CD4-positive, alpha-beta T cell (primary cell): ENCODE measurements at regions of chr1 and their contacts with region 1.

Region 1: DNA sequence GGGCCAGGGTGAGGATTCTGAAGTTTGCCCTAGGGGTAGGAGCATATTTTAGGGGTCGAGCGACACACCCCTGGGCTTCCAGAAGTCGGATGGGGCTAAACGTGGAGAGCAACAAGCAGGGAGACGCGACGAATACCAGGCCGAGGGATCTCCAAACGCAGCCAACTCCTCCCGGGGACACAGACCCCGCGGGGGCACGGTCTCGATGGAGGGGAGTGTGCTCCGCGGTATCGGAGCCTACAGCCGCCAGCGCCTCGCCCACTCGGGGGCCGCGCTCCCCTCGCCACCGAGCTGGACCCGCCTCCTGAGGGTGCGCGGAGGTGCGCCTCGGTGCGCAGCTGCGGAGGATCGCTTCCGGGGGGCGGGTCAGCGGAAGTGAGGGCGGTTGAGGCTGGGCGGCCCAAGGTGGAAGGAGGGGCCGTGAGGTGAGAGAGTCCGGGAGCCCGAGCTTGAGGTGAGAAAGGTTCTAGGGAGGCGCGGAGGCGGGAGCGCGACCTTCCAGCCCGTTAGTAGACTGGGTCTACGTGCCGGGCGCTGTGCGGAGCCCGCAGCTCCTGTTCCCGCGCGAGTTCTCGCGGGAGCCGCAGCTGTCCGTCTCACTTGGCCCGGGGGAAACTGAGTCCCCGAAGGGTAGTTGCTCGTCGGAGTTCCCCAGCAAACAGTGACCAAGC is at the start of gene MTFR1L:
- DNase-seq: peak; percentile 87 to 97 (median 93)
- ATAC-seq: peak; percentile 85
- H3K4me3 ChIP-seq: peak within 1 kb of the TSS; percentile 97
- H3K4me3 Mint-ChIP-seq: peak within 1 kb of the TSS; percentile 98
- H3K27ac ChIP-seq: peak within 1 kb of the TSS; percentile 88 to 89
- H3K27ac Mint-ChIP-seq: peak within 1 kb of the TSS; percentile 97
- H3K4me1 ChIP-seq: peaks cover 44% of the 10 kb centered on the region
- H3K4me1 Mint-ChIP-seq: peaks cover 49% of the 10 kb centered on the region
- H3K27me3 ChIP-seq: no peaks in the 10 kb centered on the region
- H3K27me3 Mint-ChIP-seq: no peaks in the 10 kb centered on the region
- CTCF ChIP-seq: no peak
- total RNA-seq, gene MTFR1L: 25.5 to 28.0 TPM

Region 2: GRCh38 chr1:25232027-25232865 is 587.5 kb before region 1 on chr1 and contains the start of gene SYF2:
- CTCF ChIA-PET with region 1: no interaction called
- POLR2A ChIA-PET with region 1: interaction called, 12 read pairs
- intact Hi-C with region 1: no loop called
- DNase-seq: peak; percentile 76 to 96 (median 86)
- ATAC-seq: peak; percentile 90
- H3K4me3 ChIP-seq: peak within 1 kb of the TSS; percentile 65
- H3K4me3 Mint-ChIP-seq: no peak within 1 kb of the TSS
- H3K27ac ChIP-seq: peak within 1 kb of the TSS; percentile 85 to 93
- H3K27ac Mint-ChIP-seq: no peak within 1 kb of the TSS
- H3K4me1 ChIP-seq: peaks cover 30% of the 10 kb centered on the region
- H3K4me1 Mint-ChIP-seq: peaks cover 27% of the 10 kb centered on the region
- H3K27me3 ChIP-seq: no peaks in the 10 kb centered on the region
- H3K27me3 Mint-ChIP-seq: no peaks in the 10 kb centered on the region
- CTCF ChIP-seq: no peak
- total RNA-seq, gene SYF2: 93.3 to 98.9 TPM

Region 3: DNA sequence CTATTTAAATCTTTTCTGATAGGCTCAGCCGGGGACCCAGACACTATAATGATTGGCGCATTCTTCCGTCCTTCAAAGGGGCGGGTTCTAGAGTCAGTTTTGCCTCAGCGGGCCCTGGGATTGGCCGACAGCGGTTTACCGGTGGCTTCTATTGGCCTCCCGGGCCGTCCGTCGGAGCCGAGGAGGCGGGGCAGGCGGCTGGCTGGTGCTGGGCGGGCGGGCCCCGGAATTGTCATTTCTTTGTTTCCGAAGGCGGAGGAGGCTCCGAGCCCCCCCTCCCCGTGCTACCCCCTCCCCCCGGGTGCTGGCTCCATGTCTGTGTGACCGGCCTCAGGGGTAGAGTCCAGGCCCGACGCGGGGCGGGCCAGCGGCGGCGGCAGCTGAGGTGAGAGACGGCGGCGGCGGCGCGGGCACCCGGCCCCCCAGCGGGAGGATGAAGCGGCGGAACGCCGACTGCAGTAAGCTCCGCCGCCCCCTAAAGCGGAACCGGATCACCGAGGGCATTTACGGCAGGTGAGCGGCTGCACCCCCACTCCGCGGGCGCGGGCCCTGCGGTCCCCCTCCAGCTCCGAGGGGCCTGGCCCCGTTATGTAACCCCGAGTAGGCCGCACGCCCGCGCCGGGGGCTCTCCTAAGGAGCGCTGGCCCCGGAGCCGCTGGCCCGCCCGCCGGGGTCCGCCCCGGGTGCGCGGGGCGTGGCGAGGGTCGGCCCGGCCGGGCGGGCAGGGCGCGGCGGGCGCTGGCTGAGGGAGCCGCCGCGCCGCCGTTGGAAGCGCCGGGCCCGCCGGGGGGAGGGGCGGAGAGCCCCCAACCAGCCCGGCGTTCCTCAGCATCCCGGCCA is 388.8 kb before region 1 on chr1 and contains the start of gene MACO1:
- CTCF ChIA-PET with region 1: no interaction called
- POLR2A ChIA-PET with region 1: interaction called, 10 read pairs
- intact Hi-C with region 1: loop called in 1 of 2 experiments (anchors 5 kb)
- DNase-seq: peak; percentile 93 to 98 (median 96)
- ATAC-seq: peak; percentile 82
- H3K4me3 ChIP-seq: peak within 1 kb of the TSS; percentile 83
- H3K4me3 Mint-ChIP-seq: peak within 1 kb of the TSS; percentile 92
- H3K27ac ChIP-seq: peak within 1 kb of the TSS; percentile 96 to 97
- H3K27ac Mint-ChIP-seq: peak within 1 kb of the TSS; percentile 100
- H3K4me1 ChIP-seq: peaks cover 9% of the 10 kb centered on the region
- H3K4me1 Mint-ChIP-seq: peaks cover 58% of the 10 kb centered on the region
- H3K27me3 ChIP-seq: no peaks in the 10 kb centered on the region
- H3K27me3 Mint-ChIP-seq: no peaks in the 10 kb centered on the region
- CTCF ChIP-seq: no peak
- total RNA-seq, gene MACO1: 24.1 to 24.9 TPM

Region 4: DNA sequence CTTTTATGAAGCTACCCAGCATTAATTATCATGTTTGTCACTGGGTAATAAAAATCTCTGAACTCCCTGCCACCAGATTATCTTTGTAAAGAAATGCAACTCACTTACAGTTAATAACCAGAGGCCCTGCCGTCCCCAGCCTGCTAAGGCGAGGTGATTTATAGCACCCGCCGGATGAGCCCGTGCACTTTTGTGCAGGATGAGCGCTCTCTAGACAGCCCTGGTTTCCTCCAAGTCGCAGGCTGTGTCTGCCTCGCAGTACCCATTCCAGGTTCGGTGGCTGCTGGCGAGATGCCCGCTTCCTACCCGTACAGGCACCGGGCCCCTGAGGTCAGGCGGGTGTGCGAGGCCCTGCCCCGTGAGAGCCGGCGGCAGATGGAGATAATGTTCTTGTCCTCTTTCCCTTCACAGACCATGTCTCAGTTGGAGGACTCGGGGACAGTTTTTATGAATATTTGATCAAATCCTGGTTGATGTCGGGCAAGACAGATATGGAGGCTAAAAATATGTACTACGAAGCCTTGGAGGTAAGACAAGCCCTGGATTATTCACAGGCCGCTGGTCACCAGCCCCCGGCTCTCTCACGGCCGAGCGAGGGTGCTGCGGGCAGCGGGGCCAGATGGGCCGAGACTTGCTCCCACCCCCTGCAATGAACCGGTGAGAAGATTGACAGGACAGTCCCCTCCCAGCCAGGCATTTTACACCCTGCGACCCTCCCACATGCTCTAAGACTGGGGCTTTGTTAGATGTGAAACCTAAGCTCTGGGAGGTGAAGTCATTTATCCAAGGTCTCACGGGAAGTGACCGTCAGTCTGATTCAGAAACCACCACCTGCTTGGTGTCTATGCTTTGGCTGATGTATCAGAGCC is 48.2 kb before region 1 on chr1:
- CTCF ChIA-PET with region 1: no interaction called
- POLR2A ChIA-PET with region 1: interaction called, 26 read pairs
- intact Hi-C with region 1: no loop called
- DNase-seq: peak; percentile 15 to 78 (median 58)
- ATAC-seq: peak; percentile 17
- H3K4me3 ChIP-seq: no peak overlapping the region
- H3K4me3 Mint-ChIP-seq: peak overlapping the region; percentile 77
- H3K27ac ChIP-seq: peak overlapping the region; percentile 12 to 72
- H3K27ac Mint-ChIP-seq: peak overlapping the region; percentile 98
- H3K4me1 ChIP-seq: peaks cover 82% of the 10 kb centered on the region
- H3K4me1 Mint-ChIP-seq: peaks cover 85% of the 10 kb centered on the region
- H3K27me3 ChIP-seq: no peaks in the 10 kb centered on the region
- H3K27me3 Mint-ChIP-seq: no peaks in the 10 kb centered on the region
- CTCF ChIP-seq: no peak

Region 5: GRCh38 chr1:25837262-25837875 is 17.7 kb after region 1 on chr1:
- CTCF ChIA-PET with region 1: interaction called, 3 read pairs
- POLR2A ChIA-PET with region 1: interaction called, 43 read pairs
- intact Hi-C with region 1: no loop called
- DNase-seq: peak in 1 of 14 experiments; percentile 8
- ATAC-seq: no peak
- H3K4me3 ChIP-seq: no peak overlapping the region
- H3K4me3 Mint-ChIP-seq: no peak overlapping the region
- H3K27ac ChIP-seq: no peak overlapping the region
- H3K27ac Mint-ChIP-seq: no peak overlapping the region
- H3K4me1 ChIP-seq: peaks cover under 1% of the 10 kb centered on the region
- H3K4me1 Mint-ChIP-seq: peaks cover 2% of the 10 kb centered on the region
- H3K27me3 ChIP-seq: no peaks in the 10 kb centered on the region
- H3K27me3 Mint-ChIP-seq: no peaks in the 10 kb centered on the region
- CTCF ChIP-seq: peak; percentile 42

Region 6: DNA sequence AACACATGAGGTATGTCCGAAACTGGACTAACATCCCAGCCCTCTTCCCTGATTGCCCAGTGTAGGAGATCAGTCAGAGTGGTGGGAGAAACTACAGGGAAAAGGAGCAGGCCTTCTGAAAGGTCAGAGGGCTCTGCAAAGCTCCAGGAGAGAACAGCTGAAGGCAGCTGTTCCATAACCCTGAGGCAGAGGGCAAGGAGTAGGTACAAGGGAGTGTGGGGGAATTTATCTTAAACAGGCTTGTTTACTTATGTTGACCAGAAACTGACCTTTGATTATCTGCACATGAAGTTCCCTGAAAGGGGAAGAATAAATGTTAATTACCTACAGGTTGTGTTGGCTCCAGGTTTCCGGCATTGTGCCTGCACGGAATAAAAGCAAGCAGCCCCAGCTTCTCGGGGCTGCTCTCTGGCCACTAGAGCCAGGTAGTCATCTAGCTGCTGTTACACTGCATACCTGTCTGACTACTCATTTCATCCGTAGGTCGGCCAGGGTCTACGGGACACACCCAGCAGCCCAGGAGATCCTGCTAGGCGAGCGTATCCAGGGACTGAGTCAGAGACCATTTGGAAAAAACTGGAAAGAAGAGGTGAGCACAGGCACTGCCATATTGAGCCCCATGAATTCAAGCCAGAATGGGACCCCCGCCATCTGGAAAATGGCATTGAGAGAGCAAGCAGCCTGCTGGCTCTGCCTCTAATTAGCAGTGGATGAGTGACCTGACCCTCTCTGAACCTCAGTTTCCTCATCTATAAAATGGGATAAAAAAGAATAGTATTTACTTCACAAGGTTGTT is 70.7 kb after region 1 on chr1:
- CTCF ChIA-PET with region 1: interaction called, 7 read pairs
- POLR2A ChIA-PET with region 1: interaction called, 12 read pairs
- intact Hi-C with region 1: loop called in 1 of 2 experiments (anchors 5 kb)
- DNase-seq: no peak
- ATAC-seq: no peak
- H3K4me3 ChIP-seq: no peak overlapping the region
- H3K4me3 Mint-ChIP-seq: no peak overlapping the region
- H3K27ac ChIP-seq: no peak overlapping the region
- H3K27ac Mint-ChIP-seq: no peak overlapping the region
- H3K4me1 ChIP-seq: peaks cover 6% of the 10 kb centered on the region
- H3K4me1 Mint-ChIP-seq: peaks cover 5% of the 10 kb centered on the region
- H3K27me3 ChIP-seq: no peaks in the 10 kb centered on the region
- H3K27me3 Mint-ChIP-seq: no peaks in the 10 kb centered on the region
- CTCF ChIP-seq: no peak

Region 7: GRCh38 chr1:25997828-25998761 is 178.4 kb after region 1 on chr1 and contains the start of gene PAFAH2:
- CTCF ChIA-PET with region 1: interaction called, 3 read pairs
- POLR2A ChIA-PET with region 1: interaction called, 18 read pairs
- intact Hi-C with region 1: loop called in 1 of 2 experiments (anchors 1 kb)
- DNase-seq: peak; percentile 92 to 99 (median 96)
- ATAC-seq: peak; percentile 95
- H3K4me3 ChIP-seq: peak within 1 kb of the TSS; percentile 71
- H3K4me3 Mint-ChIP-seq: peak within 1 kb of the TSS; percentile 91
- H3K27ac ChIP-seq: peak within 1 kb of the TSS; percentile 87 to 93
- H3K27ac Mint-ChIP-seq: peak within 1 kb of the TSS; percentile 97
- H3K4me1 ChIP-seq: peaks cover 21% of the 10 kb centered on the region
- H3K4me1 Mint-ChIP-seq: peaks cover 39% of the 10 kb centered on the region
- H3K27me3 ChIP-seq: no peaks in the 10 kb centered on the region
- H3K27me3 Mint-ChIP-seq: no peaks in the 10 kb centered on the region
- CTCF ChIP-seq: peak; percentile 90
- total RNA-seq, gene PAFAH2: 7.9 to 8.1 TPM